Naive thymus-derived CD4-positive, alpha-beta T cell (primary cell): ENCODE measurements at regions of chrX and their contacts with region 1.

Region 1: DNA sequence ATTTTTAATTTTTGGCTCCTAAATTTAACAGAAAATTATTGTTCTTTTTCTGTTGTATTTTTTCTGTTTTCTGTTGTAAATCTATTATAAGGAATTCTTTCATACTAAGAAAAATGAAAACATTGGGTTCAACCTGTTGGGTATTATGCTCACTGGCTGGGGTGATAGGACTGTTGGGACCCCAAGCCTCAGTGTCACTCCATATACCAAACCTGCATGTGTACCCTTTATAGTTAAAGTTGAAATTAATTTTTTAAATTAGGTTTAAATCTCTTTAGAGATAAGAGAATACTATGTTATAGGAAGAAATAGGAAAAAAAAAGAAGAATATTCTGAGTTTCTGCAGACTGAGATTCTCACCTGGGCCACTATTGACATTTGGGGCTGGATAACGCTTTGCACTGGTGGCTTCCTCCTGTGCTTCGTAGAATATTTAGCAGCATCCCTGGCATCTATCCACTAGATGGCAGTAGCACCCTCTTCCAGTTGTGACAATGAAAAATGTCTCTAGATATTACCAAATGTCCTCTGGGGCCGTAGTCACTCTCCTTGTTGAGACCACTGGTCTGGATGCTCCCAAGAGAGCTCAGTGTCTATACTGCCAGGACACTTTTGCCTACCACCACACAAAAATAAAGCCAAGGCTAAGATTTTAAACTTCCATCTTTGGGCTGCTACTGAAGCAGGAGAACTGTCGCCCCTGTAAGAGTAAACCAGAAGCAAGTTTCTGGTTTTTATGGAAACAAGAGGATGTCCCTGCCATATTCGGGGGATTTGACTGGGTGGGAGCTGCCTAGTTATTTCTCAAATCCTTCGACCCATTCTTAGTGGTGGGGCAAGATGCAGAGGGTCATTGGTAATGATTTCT is 22.4 kb upstream of the CLTRN start:
- DNase-seq: peak; percentile 9 to 78 (median 59)
- ATAC-seq: peak; percentile 95
- H3K4me3 ChIP-seq: no peak overlapping the region
- H3K4me3 Mint-ChIP-seq: no peak overlapping the region
- H3K27ac ChIP-seq: no peak overlapping the region
- H3K27ac Mint-ChIP-seq: peak overlapping the region in 7 of 9 donors; percentile 29 to 86 (median 67)
- H3K4me1 ChIP-seq: no peaks in the 10 kb centered on the region
- H3K4me1 Mint-ChIP-seq: peaks cover 0 to 14% (median 13%) of the 10 kb centered on the region in 7 donors
- H3K27me3 ChIP-seq: no peaks in the 10 kb centered on the region
- H3K27me3 Mint-ChIP-seq: no peaks in the 10 kb centered on the region

Region 2: GRCh38 chrX:15815779-15816437 is 128.9 kb after region 1 on chrX:
- CTCF ChIA-PET with region 1: interaction called, 5 read pairs
- POLR2A ChIA-PET with region 1: no interaction called
- intact Hi-C with region 1: loop called in 1 of 2 experiments (anchors 1 kb)
- DNase-seq: peak in 5 of 9 donors; percentile 11 to 32 (median 18)
- ATAC-seq: peak; percentile 82
- H3K4me3 ChIP-seq: no peak overlapping the region
- H3K4me3 Mint-ChIP-seq: peak overlapping the region in 5 of 10 donors; percentile 13 to 63 (median 39)
- H3K27ac ChIP-seq: no peak overlapping the region
- H3K27ac Mint-ChIP-seq: peak overlapping the region; percentile 24 to 88 (median 52)
- H3K4me1 ChIP-seq: peaks cover 14 to 26% of the 10 kb centered on the region in 2 donors
- H3K4me1 Mint-ChIP-seq: peaks cover 6 to 47% (median 36%) of the 10 kb centered on the region in 7 donors
- H3K27me3 ChIP-seq: no peaks in the 10 kb centered on the region
- H3K27me3 Mint-ChIP-seq: no peaks in the 10 kb centered on the region

Region 3: GRCh38 chrX:15973299-15973698 is 286.2 kb after region 1 on chrX:
- CTCF ChIA-PET with region 1: no interaction called
- POLR2A ChIA-PET with region 1: no interaction called
- intact Hi-C with region 1: loop called (anchors 2 to 5 kb)
- DNase-seq: peak in 3 of 9 donors; percentile 1 to 14 (median 2)
- ATAC-seq: peak; percentile 54
- H3K4me3 ChIP-seq: no peak overlapping the region
- H3K4me3 Mint-ChIP-seq: no peak overlapping the region
- H3K27ac ChIP-seq: no peak overlapping the region
- H3K27ac Mint-ChIP-seq: no peak overlapping the region
- H3K4me1 ChIP-seq: no peaks in the 10 kb centered on the region
- H3K4me1 Mint-ChIP-seq: peaks cover 0 to 7% (median 0%) of the 10 kb centered on the region in 7 donors
- H3K27me3 ChIP-seq: no peaks in the 10 kb centered on the region
- H3K27me3 Mint-ChIP-seq: peaks cover 0 to 2% (median 0%) of the 10 kb centered on the region in 5 donors

Region 4: GRCh38 chrX:16445166-16445752 is 758.2 kb after region 1 on chrX:
- CTCF ChIA-PET with region 1: no interaction called
- POLR2A ChIA-PET with region 1: no interaction called
- intact Hi-C with region 1: loop called in 1 of 2 experiments (anchors 5 kb)
- DNase-seq: peak; percentile 6 to 57 (median 29)
- ATAC-seq: peak; percentile 72
- H3K4me3 ChIP-seq: no peak overlapping the region
- H3K4me3 Mint-ChIP-seq: no peak overlapping the region
- H3K27ac ChIP-seq: no peak overlapping the region
- H3K27ac Mint-ChIP-seq: no peak overlapping the region
- H3K4me1 ChIP-seq: peaks cover 0 to 17% of the 10 kb centered on the region in 2 donors
- H3K4me1 Mint-ChIP-seq: peaks cover 0 to 39% (median 24%) of the 10 kb centered on the region in 7 donors
- H3K27me3 ChIP-seq: no peaks in the 10 kb centered on the region
- H3K27me3 Mint-ChIP-seq: peaks cover 0 to 3% (median 0%) of the 10 kb centered on the region in 5 donors

Region 5: GRCh38 chrX:16670998-16671397 is 983.9 kb after region 1 on chrX:
- CTCF ChIA-PET with region 1: interaction called, 3 read pairs
- POLR2A ChIA-PET with region 1: no interaction called
- intact Hi-C with region 1: loop called in 1 of 2 experiments (anchors 1 kb)
- DNase-seq: peak in 7 of 9 donors; percentile 13 to 57 (median 37)
- ATAC-seq: peak; percentile 64
- H3K4me3 ChIP-seq: no peak overlapping the region
- H3K4me3 Mint-ChIP-seq: no peak overlapping the region
- H3K27ac ChIP-seq: no peak overlapping the region
- H3K27ac Mint-ChIP-seq: peak overlapping the region in 1 of 9 donors; percentile 32
- H3K4me1 ChIP-seq: no peaks in the 10 kb centered on the region
- H3K4me1 Mint-ChIP-seq: peaks cover 0 to 5% (median 0%) of the 10 kb centered on the region in 7 donors
- H3K27me3 ChIP-seq: no peaks in the 10 kb centered on the region
- H3K27me3 Mint-ChIP-seq: no peaks in the 10 kb centered on the region

Region 6: DNA sequence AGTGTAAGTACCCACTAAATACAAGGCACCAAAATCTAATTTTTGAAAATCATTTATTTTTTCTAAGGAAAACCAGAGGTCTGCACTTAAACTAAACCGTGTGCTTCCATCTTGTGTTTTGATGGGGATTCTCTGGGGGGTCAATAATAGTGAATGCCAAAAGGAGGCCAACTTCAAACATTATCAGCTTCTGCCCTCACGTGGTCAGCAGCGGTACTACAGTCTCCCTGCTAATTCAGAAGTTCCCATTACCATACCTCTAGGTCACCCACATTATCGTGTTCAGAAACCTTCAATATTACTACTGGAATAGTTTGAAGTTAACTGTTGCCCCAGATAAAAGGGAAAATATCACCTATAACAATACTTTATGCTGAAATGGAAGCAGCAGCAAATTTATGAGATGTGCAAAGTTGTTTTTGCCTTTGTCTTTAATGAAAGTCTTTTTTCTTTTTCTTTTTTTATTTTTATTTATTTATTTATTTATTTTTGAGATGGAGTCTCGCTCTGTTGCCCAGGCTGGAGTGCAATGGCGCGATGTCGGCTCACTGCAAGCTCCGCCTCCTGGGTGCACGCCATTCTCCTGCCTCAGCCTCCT is 1008.1 kb after region 1 on chrX:
- CTCF ChIA-PET with region 1: no interaction called
- POLR2A ChIA-PET with region 1: no interaction called
- intact Hi-C with region 1: loop called in 1 of 2 experiments (anchors 1 kb)
- DNase-seq: peak in 8 of 9 donors; percentile 14 to 62 (median 46)
- ATAC-seq: peak; percentile 84
- H3K4me3 ChIP-seq: no peak overlapping the region
- H3K4me3 Mint-ChIP-seq: no peak overlapping the region
- H3K27ac ChIP-seq: no peak overlapping the region
- H3K27ac Mint-ChIP-seq: peak overlapping the region in 1 of 9 donors; percentile 56
- H3K4me1 ChIP-seq: no peaks in the 10 kb centered on the region
- H3K4me1 Mint-ChIP-seq: peaks cover 0 to 5% (median 0%) of the 10 kb centered on the region in 7 donors
- H3K27me3 ChIP-seq: no peaks in the 10 kb centered on the region
- H3K27me3 Mint-ChIP-seq: no peaks in the 10 kb centered on the region